K562 (cell line): ENCODE measurements at regions of chr10 and their contacts with region 1.

Region 1: GRCh38 chr10:63935705-63936104 is 414.5 kb downstream of the REEP3 start:
- DNase-seq: peak in 1 of 4 experiments; percentile 6
- ATAC-seq: peak; percentile 37; the same call in 2 of the 3 replicates
- H3K4me3 ChIP-seq: no peak overlapping the region
- H3K27ac ChIP-seq: no peak overlapping the region
- H3K4me1 ChIP-seq: no peaks in the 10 kb centered on the region
- H3K27me3 ChIP-seq: no peaks in the 10 kb centered on the region
- CTCF ChIP-seq: peak in 2 of 3 experiments; percentile 35 to 46; a peak in 3 of 6 replicates
- EP300 ChIP-seq: no peak
- POLR2A ChIP-seq: no peak
- RAD21 ChIP-seq: peak in 1 of 2 experiments; percentile 37; a peak in 2 of 4 replicates

Region 2: GRCh38 chr10:63801166-63801565 is 134.5 kb before region 1 on chr10:
- CTCF ChIA-PET with region 1: no interaction called
- POLR2A ChIA-PET with region 1: no interaction called
- in situ Hi-C with region 1: no loop called
- intact Hi-C with region 1: no loop called
- DNase-seq: no peak
- ATAC-seq: no peak
- H3K4me3 ChIP-seq: no peak overlapping the region
- H3K27ac ChIP-seq: no peak overlapping the region
- H3K4me1 ChIP-seq: no peaks in the 10 kb centered on the region
- H3K27me3 ChIP-seq: no peaks in the 10 kb centered on the region
- CTCF ChIP-seq: no peak
- EP300 ChIP-seq: no peak
- POLR2A ChIP-seq: no peak
- RAD21 ChIP-seq: no peak

Region 3: GRCh38 chr10:63976538-63976937 is 40.8 kb after region 1 on chr10:
- CTCF ChIA-PET with region 1: interaction called, 6 read pairs
- POLR2A ChIA-PET with region 1: no interaction called
- in situ Hi-C with region 1: no loop called
- intact Hi-C with region 1: loop called (anchors 1 kb)
- DNase-seq: peak; percentile 53 to 67 (median 62)
- ATAC-seq: peak; percentile 98
- H3K4me3 ChIP-seq: no peak overlapping the region
- H3K27ac ChIP-seq: no peak overlapping the region
- H3K4me1 ChIP-seq: peaks cover 0 to 6% of the 10 kb centered on the region in 2 experiments; a peak in 1 of 5 replicates
- H3K27me3 ChIP-seq: peaks cover 0 to 16% of the 10 kb centered on the region in 2 experiments; a peak in 2 of 5 replicates
- CTCF ChIP-seq: peak; percentile 74 to 80 (median 76)
- EP300 ChIP-seq: no peak
- POLR2A ChIP-seq: no peak
- RAD21 ChIP-seq: peak; percentile 33 to 58